ENCODE measurements at regions of chr4 and their contacts with region 1.

Region 1: GRCh38 chr4:184937745-184938144 is 80.5 kb upstream of the HELT start:
- DNase-seq: no peak
- CTCF ChIP-seq: no peak

Region 2: DNA sequence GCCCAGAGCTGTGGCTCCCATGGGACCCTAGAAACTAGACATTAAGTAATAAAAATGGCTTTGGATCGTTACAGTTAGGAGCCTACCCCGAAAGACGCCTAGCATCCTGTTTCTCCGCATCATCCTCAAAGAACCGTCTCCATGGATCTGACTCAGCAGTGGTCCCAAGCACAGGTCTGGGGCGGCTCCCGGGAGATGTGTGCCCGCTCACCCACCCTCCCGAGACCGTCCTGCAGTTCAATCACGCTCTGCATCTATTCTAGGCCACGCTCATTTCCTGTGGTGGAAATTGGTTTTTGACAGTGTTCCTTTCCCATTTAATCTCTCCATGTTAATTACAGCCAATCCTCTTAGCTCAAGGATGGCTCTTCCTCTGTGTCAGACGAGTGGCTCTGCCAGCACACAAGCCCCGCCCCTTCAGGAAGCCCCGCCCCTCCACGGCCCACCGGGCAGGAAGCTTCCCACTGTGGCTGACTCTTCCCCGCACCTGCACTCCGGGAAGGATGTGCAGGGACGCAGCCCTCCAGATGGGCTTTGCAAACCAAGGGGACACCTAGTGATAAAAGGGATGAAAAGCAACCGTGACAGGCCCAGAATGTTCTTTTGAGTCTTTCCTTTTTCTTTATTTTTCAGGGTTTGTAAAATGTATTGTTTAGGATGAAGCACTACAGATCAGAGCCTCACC is 46.1 kb after region 1 on chr4:
- CTCF ChIA-PET with region 1: interaction called, 10 read pairs
- POLR2A ChIA-PET with region 1: no interaction called
- DNase-seq: peak; percentile 81
- CTCF ChIP-seq: peak; percentile 52